CD8-positive, alpha-beta T cell (primary cell): ENCODE measurements at regions of chr14 and their contacts with region 1.

Region 1: DNA sequence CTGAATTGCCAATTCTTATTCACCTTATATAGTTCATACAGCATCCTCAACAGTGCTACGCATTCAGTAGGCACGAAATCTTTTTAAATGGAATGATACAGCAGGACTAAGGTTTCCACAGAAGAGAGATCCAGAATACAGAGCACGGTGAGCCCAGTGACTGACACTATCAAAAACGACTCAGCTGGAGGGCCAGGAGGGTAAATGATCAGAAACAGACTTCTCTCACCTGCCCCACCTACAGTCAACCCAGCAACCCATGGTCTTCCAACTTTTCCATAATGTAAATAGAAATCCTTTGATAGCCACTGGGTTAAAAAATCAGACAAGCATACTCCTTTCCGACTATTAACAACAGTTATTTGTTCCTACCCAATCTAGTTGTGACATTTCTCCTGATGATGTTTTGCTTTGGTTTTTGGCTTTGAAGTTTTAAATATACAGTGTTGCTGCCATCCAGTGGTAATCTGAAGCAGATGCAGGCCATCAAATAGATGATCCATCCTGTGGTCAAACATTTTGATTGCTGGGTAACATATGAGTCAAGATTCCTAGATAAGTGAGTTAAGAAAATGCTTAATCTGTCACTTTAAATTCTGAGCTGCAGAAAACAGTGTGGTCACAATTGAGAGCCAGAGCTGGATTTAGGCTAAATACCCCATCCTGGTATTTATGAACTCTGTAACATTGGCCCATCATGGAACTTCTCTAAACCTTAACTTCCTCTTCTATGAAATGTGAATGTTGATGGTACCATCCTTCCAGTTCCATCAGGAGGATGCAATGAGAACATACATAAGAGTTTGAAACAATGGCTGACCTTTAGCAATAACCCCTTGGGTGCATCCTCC is 42.0 kb downstream of the GPHB5 start:
- DNase-seq: peak in 2 of 9 experiments; percentile 22 to 27
- ATAC-seq: peak; percentile 29
- H3K4me3 ChIP-seq: no peak overlapping the region
- H3K4me3 Mint-ChIP-seq: no peak overlapping the region
- H3K27ac ChIP-seq: no peak overlapping the region
- H3K27ac Mint-ChIP-seq: no peak overlapping the region
- H3K4me1 ChIP-seq: no peaks in the 10 kb centered on the region
- H3K4me1 Mint-ChIP-seq: no peaks in the 10 kb centered on the region
- H3K27me3 ChIP-seq: no peaks in the 10 kb centered on the region
- H3K27me3 Mint-ChIP-seq: peaks cover 3% of the 10 kb centered on the region
- CTCF ChIP-seq: no peak

Region 2: GRCh38 chr14:62179367-62180018 is 1097.2 kb before region 1 on chr14:
- CTCF ChIA-PET with region 1: interaction called, 3 read pairs
- POLR2A ChIA-PET with region 1: no interaction called
- intact Hi-C with region 1: loop called in 1 of 2 experiments (anchors 5 kb)
- DNase-seq: peak in 2 of 9 experiments; percentile 22 to 30
- ATAC-seq: no peak
- H3K4me3 ChIP-seq: no peak overlapping the region
- H3K4me3 Mint-ChIP-seq: no peak overlapping the region
- H3K27ac ChIP-seq: no peak overlapping the region
- H3K27ac Mint-ChIP-seq: no peak overlapping the region
- H3K4me1 ChIP-seq: no peaks in the 10 kb centered on the region
- H3K4me1 Mint-ChIP-seq: no peaks in the 10 kb centered on the region
- H3K27me3 ChIP-seq: no peaks in the 10 kb centered on the region
- H3K27me3 Mint-ChIP-seq: peaks cover 21% of the 10 kb centered on the region
- CTCF ChIP-seq: no peak